Right cardiac atrium (tissue), 5 donors: ENCODE measurements at regions of chr17 and their contacts with region 1.

Region 1: DNA sequence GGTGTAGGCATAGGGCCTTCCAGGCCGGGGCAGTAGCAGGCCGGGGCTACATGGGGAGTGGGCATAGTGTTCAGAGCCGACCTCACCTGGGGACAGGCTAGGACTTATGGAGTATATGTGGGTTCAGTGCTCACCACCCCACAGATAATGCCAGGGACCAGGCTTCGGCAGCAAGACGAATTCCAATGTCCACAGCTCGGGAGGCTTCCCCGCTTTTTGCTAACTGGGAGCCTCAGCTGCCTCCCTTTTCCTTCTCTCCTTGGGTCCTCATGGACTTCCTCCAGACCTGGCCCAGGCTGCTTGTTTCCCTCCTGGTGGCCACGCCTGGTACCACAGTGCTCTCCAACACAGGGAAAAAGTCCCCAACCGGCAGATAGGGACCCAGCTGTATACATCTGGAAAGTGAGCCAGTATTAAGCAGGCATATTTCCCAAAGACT is 20.1 kb upstream of the SLC46A1 start:
- DNase-seq: no peak
- ATAC-seq: peak; percentile 23 to 26
- H3K4me3 ChIP-seq: no peak overlapping the region
- H3K27ac ChIP-seq: no peak overlapping the region
- H3K4me1 ChIP-seq: no peaks in the 10 kb centered on the region
- H3K27me3 ChIP-seq: no peaks in the 10 kb centered on the region

Region 2: DNA sequence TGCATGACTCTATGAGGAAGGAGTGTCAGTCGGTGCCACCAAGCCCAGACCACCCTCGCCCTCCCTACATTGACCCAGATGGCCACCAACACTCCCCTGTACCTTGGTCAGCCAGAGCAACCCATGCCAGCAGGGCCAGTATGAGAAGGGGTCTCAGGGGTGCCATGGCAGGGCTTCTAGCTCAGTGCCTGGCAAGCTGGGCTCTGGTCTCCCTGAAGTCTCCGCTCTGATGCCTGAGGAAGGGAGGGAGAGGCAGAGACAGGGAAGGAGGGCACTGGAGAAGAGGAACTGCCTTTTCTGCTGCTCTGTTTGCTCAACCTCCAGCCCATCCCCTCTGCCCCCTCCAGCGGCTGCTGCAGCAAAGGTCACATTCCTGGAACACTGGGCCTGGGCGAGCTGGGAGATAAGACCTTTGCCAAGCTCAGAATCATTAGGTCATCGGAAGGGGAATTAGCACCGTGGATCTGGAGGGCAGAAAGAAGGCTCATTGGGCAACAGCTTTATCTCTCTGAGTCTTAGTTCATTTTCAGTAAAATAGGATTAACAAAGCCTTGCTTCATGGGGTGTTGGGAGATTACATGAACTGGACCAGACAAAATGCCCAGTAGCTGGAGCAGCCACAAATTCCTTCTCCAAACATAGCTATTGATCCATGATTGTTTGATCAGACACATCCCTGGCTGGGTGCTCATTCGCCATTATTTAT is 55.9 kb before region 1 on chr17 and contains the start of gene VTN:
- intact Hi-C with region 1: no loop called
- DNase-seq: peak; percentile 70 to 78 (median 76)
- ATAC-seq: peak; percentile 28 to 72
- H3K4me3 ChIP-seq: peak within 1 kb of the TSS; percentile 56
- H3K27ac ChIP-seq: peak within 1 kb of the TSS; percentile 44
- H3K4me1 ChIP-seq: peaks cover 14% of the 10 kb centered on the region
- H3K27me3 ChIP-seq: no peaks in the 10 kb centered on the region
- total RNA-seq, gene VTN: 3.8 to 10.5 (median 4.1) TPM

Region 3: GRCh38 chr17:28484296-28484695 is 58.2 kb after region 1 on chr17:
- intact Hi-C with region 1: loop called in 1 of 4 experiments (anchors 10 kb)
- DNase-seq: no peak
- ATAC-seq: no peak
- H3K4me3 ChIP-seq: no peak overlapping the region
- H3K27ac ChIP-seq: no peak overlapping the region
- H3K4me1 ChIP-seq: no peaks in the 10 kb centered on the region
- H3K27me3 ChIP-seq: no peaks in the 10 kb centered on the region

Region 4: DNA sequence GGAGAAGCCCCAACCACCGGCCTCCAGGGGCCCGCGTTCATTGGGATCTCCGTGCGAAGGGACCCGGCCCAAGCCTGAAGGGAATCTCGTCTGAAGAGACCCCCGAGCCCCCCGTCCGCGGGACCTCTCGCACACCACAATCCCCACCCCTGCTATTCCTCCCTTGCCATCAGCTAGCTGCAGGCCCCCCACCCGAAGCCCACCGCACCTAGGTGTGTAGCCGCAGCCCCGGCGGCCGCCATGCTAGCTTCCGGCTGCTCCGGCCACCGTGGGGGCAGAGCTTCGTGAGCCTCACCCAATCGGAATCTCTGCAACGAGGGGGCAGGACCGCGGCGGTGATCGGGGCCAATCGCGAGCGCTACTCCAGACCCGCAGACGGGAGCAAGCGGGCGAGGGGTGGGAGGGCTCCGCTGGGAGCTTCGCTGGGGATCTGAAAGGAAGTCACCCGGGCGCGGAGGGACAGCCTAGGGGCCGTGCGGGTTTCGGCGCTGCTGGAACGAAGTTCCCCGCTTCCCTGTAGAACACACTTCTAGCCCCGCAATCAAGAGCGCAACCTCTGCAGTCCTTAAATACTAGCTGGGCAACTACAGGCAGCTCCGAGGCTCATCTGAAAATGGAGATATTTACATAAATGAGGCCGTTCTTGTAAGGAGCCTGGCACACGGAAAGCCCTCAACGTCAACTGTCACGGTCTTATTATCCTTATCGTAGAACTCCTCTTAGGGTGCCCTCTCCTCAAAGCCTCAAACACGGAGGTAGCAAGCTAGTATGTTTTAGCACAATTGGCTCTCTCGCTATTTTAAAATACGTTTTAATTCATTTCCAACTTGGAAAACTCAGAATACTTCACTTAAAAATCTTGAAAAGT is 145.4 kb after region 1 on chr17 and contains the start of gene PIGS:
- intact Hi-C with region 1: no loop called
- DNase-seq: peak; percentile 96 to 98 (median 98)
- ATAC-seq: peak; percentile 97 to 98
- H3K4me3 ChIP-seq: peak within 1 kb of the TSS; percentile 68
- H3K27ac ChIP-seq: peak within 1 kb of the TSS; percentile 78
- H3K4me1 ChIP-seq: no peaks in the 10 kb centered on the region
- H3K27me3 ChIP-seq: no peaks in the 10 kb centered on the region
- total RNA-seq, gene PIGS: 36.4 to 41.8 (median 40.7) TPM